K562 (cell line): ENCODE measurements at regions of chr9 and their contacts with region 1.

Region 1: DNA sequence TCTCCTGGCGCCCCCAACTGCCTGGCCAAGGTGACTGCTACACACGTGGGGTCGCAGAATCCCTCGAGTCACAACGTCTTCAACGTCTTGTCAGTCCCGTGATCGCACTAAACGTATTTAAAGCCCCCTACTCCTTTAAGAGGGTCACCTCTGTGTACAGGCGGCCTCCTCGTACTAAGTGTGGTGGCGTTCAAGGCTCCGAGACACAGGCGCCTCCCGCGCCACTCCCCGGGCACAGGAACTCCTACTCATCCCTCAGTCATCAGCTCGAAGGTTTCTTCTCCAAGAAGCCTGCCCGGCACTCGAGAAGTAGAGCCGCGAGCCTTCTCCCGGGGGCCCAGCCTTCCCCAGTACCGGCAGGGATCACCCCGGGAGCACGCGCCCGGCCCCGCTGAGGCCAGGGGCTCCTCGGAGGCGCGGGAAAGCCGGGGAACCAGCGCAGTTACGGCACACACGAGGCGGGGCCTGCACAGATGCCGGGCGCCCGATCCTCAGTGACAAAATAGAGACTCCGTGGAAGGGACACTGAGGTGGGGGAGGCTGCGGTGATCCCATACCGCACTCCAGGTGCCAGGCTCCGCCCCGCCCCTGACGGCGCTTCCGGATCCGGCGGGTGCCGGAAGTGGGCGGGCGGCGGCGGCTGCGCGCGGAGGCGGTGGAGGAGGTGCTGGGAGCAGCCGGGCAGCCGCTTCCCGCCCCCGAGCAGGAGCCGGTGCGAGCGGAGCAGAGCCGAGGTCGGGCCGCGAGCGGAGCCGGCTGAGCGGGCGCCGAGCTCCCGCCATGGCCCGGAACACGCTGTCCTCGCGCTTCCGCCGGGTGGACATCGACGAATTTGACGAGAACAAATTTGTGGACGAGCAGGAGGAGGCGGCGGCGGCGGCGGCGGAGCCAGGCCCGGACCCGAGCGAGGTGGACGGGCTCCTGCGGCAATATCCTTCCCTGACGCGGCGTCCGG is 6.9 kb downstream of the ARPC5L start:
- DNase-seq: peak; percentile 91 to 97 (median 94)
- ATAC-seq: peak; percentile 87
- H3K4me3 ChIP-seq: peak overlapping the region; percentile 91
- H3K27ac ChIP-seq: peak overlapping the region; percentile 97
- H3K4me1 ChIP-seq: peaks cover 35 to 50% of the 10 kb centered on the region in 2 experiments
- H3K27me3 ChIP-seq: no peaks in the 10 kb centered on the region
- CTCF ChIP-seq: peak; percentile 37 to 60 (median 48); a peak in 5 of 6 replicates
- EP300 ChIP-seq: no peak
- POLR2A ChIP-seq: peak; percentile 96
- RAD21 ChIP-seq: peak in 1 of 2 experiments; percentile 24; a peak in 2 of 4 replicates

Region 2: GRCh38 chr9:124940693-124941453 is 72.1 kb after region 1 on chr9 and contains the start of gene GOLGA1:
- CTCF ChIA-PET with region 1: no interaction called
- POLR2A ChIA-PET with region 1: no interaction called
- in situ Hi-C with region 1: no loop called
- intact Hi-C with region 1: loop called (anchors 2 kb)
- DNase-seq: peak; percentile 96
- ATAC-seq: peak; percentile 92
- H3K4me3 ChIP-seq: peak within 1 kb of the TSS; percentile 75
- H3K27ac ChIP-seq: peak within 1 kb of the TSS; percentile 95
- H3K4me1 ChIP-seq: peaks cover 6 to 8% of the 10 kb centered on the region in 2 experiments; a peak in 3 of 5 replicates
- H3K27me3 ChIP-seq: no peaks in the 10 kb centered on the region
- CTCF ChIP-seq: no peak
- EP300 ChIP-seq: peak; percentile 49; the same call in 1 of the 2 replicates
- POLR2A ChIP-seq: peak; percentile 94
- RAD21 ChIP-seq: no peak
- polyA plus RNA-seq, gene GOLGA1: 2.9 to 3.9 TPM